AG04450 (cell line): ENCODE measurements at regions of chr10 and their contacts with region 1.

Region 1: DNA sequence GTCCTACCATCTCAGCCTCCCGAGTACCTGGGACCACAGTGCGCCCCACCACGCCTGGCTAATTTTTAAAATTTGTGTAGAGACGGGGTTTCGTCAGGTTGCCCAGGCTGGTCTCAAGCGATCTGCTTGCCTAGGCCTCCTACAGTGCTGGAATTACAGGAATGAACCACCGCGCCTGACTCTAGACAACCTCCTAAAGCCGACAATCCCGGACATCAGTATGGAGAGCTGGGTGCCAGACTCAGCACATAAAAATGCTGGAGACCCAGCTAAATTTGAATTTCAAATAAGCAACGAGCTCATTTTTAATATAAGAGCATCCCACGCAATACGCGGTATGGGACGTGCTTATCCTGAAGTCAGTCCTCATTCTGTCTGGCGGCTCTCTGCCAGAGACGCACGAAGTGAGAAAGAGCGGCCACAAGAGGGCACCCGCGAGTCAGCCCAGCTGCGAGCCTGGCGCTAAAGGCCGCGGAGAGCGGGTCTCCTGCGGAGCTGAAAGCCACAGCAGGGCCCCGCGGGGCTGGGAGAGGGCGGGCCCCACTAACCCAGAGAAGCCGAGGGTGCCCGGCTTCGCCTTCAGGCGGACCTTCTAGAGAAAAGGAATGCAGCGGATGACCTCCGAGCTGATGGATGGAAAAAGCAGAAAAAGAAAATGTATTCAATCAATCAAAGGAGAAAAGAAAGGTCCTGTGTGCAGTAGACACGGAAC is 7.0 kb downstream of the CALY start:
- DNase-seq: peak; percentile 74
- H3K4me3 ChIP-seq: peak overlapping the region; percentile 35
- H3K27ac ChIP-seq: no peak overlapping the region
- H3K27me3 ChIP-seq: peaks cover 42% of the 10 kb centered on the region
- CTCF ChIP-seq: peak; percentile 95

Region 2: GRCh38 chr10:133009222-133009954 is 320.3 kb before region 1 on chr10:
- CTCF ChIA-PET with region 1: no interaction called
- POLR2A ChIA-PET with region 1: no interaction called
- DNase-seq: no peak
- H3K4me3 ChIP-seq: no peak overlapping the region
- H3K27ac ChIP-seq: no peak overlapping the region
- H3K27me3 ChIP-seq: no peaks in the 10 kb centered on the region
- CTCF ChIP-seq: no peak

Region 3: DNA sequence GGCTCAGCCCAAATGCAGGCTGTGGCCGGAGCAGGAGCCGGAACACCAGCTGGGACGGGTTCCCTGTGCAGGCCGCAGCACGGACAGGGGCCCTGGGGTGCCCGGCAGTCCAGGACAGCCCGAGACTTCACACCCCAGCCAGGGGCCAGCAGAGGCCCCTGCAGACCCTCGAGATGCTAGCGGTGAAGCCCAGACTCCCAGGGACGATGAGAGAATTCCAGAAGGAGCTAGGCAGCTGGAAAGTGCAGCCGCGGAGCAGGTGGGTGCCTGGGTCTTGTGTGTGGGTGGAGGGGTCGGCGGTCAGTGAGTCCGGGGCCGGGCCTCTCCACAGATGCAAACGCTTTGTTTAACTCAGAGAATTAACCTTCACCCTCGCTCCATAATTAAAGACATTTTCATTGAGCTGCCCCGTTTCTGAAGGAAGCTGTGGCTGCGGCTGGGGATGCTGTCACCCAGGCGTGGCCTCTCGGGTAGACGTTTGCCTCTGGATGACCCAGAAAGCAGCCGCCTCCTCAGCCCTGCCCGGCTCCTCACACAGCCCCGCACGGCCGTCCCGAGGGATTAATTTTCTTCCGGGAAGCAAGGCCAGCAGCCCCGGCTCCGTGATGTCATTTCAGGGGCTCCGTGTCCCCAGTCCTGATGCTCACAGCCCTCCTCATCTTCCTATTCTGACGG is 143.1 kb before region 1 on chr10:
- CTCF ChIA-PET with region 1: no interaction called
- POLR2A ChIA-PET with region 1: no interaction called
- DNase-seq: no peak
- H3K4me3 ChIP-seq: no peak overlapping the region
- H3K27ac ChIP-seq: no peak overlapping the region
- H3K27me3 ChIP-seq: no peaks in the 10 kb centered on the region
- CTCF ChIP-seq: no peak

Region 4: GRCh38 chr10:133314911-133315310 is 14.7 kb before region 1 on chr10:
- CTCF ChIA-PET with region 1: interaction called, 15 read pairs
- POLR2A ChIA-PET with region 1: no interaction called
- DNase-seq: no peak
- H3K4me3 ChIP-seq: no peak overlapping the region
- H3K27ac ChIP-seq: no peak overlapping the region
- H3K27me3 ChIP-seq: no peaks in the 10 kb centered on the region
- CTCF ChIP-seq: no peak

Region 5: DNA sequence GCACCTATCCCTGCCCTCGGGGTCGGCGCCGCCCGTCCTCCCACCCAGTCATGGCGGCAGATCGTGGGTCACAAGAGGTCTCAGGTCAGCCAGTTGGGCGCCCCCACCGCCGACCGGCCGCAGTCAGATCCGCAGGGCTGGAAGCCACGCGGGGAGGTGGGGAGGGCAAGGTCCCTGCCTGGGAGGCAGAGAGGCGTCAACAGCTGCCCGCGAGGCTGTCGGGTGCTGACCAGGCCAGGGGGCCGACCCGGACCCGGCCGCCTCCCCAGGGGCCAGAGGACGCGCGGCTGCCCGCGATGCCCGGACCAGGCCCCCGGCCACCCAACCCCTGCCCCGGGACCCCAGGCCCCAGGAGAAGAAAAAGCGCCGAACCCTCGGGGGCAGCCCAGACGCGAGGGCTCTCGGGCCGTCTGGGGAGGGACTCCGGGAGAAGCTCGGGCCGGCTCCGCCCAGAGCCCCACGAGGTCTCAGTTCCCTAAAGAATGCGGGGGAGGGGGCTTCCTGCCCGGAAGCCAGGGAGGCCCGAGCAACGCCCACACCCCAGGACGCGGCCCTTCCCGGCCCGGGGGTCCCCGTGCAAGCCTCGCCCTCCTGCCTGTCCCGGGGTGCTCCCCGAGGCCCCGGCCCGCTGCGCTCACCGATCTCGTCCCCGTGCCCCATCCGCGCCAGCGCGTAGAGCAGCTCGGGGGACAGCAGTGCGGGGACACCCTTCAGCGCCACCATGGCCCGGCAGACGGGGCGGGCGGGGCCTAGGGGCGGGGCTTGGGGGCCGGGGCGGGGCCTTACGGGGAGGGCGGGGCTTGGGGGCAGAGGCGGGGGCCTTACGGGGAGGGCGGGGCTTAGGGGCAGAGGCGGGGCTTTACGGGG is 27.9 kb after region 1 on chr10 and contains the start of gene FUOM:
- CTCF ChIA-PET with region 1: interaction called, 20 read pairs
- POLR2A ChIA-PET with region 1: no interaction called
- DNase-seq: no peak
- H3K4me3 ChIP-seq: peak within 1 kb of the TSS; percentile 61
- H3K27ac ChIP-seq: no peak within 1 kb of the TSS
- H3K27me3 ChIP-seq: no peaks in the 10 kb centered on the region
- CTCF ChIP-seq: no peak
- polyA plus RNA-seq, gene FUOM: 17.8 and 24.3 TPM in 2 replicates

Region 6: GRCh38 chr10:133378251-133379096 is 48.8 kb after region 1 on chr10:
- CTCF ChIA-PET with region 1: interaction called, 26 read pairs
- POLR2A ChIA-PET with region 1: interaction called, 4 read pairs
- DNase-seq: no peak
- H3K4me3 ChIP-seq: peak overlapping the region; percentile 79
- H3K27ac ChIP-seq: peak overlapping the region; percentile 11
- H3K27me3 ChIP-seq: no peaks in the 10 kb centered on the region
- CTCF ChIP-seq: no peak

Region 7: DNA sequence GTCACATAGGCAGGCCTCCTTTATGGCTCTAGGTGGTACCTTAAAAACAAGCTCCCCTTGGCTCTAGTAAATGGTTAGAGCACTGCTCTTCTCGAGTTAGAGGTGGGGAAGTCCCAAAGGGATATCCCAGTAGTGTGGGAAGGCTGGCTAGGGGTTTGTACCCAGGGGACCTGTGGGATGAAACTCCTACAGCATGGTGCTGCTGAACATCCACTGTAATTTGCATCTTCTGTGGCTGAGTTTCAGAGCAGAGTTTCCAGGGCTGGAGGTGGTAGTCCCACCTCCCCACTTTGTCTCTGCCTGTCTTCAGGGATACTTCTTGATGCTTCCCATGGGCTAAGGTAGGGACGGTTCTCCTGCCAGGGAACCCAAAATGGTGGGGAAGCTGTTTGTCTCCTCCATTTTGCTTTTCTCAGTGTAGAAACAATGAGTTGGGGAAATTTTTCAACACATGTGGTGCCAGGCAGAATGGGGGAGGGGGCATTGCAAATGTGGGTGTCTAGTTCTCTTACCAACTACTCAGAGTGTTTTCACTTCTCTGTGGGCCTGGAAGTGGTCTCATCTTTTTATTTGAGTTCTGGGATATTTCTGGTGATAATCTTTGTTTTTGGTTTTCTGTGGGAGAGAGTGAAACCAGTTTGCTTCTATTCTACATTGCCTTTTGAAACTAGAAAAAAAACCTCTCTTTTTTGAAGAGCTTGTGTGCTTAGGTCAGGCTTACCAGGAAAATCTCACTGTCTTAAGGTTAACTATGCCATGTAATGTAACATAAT is 160.4 kb after region 1 on chr10:
- CTCF ChIA-PET with region 1: interaction called, 10 read pairs
- POLR2A ChIA-PET with region 1: no interaction called
- DNase-seq: no peak
- H3K4me3 ChIP-seq: no peak overlapping the region
- H3K27ac ChIP-seq: no peak overlapping the region
- H3K27me3 ChIP-seq: no peaks in the 10 kb centered on the region
- CTCF ChIP-seq: no peak

Region 8: GRCh38 chr10:133608855-133609254 is 279.2 kb after region 1 on chr10:
- CTCF ChIA-PET with region 1: interaction called, 15 read pairs
- POLR2A ChIA-PET with region 1: no interaction called
- DNase-seq: no peak
- H3K4me3 ChIP-seq: no peak overlapping the region
- H3K27ac ChIP-seq: no peak overlapping the region
- H3K27me3 ChIP-seq: no peaks in the 10 kb centered on the region
- CTCF ChIP-seq: peak; percentile 54